WTC11 (cell line): ENCODE measurements at regions of chr12 and their contacts with region 1.

Region 1: GRCh38 chr12:54579696-54580333 is 8.6 kb downstream of the PPP1R1A start:
- DNase-seq: peak; percentile 96
- ATAC-seq: peak; percentile 96
- H3K4me3 Mint-ChIP-seq: no peak overlapping the region
- H3K27ac Mint-ChIP-seq: no peak overlapping the region
- H3K4me1 Mint-ChIP-seq: peaks cover 34% of the 10 kb centered on the region
- H3K27me3 Mint-ChIP-seq: peaks cover 39% of the 10 kb centered on the region
- CTCF ChIP-seq: peak; percentile 100

Region 2: GRCh38 chr12:54560374-54560858 is 19.4 kb before region 1 on chr12:
- CTCF ChIA-PET with region 1: interaction called, 60 read pairs
- POLR2A ChIA-PET with region 1: no interaction called
- DNase-seq: peak; percentile 91
- ATAC-seq: peak; percentile 97
- H3K4me3 Mint-ChIP-seq: peak overlapping the region; percentile 67
- H3K27ac Mint-ChIP-seq: no peak overlapping the region
- H3K4me1 Mint-ChIP-seq: peaks cover 31% of the 10 kb centered on the region
- H3K27me3 Mint-ChIP-seq: peaks cover 63% of the 10 kb centered on the region
- CTCF ChIP-seq: no peak

Region 3: GRCh38 chr12:54603173-54603814 is 23.5 kb after region 1 on chr12:
- CTCF ChIA-PET with region 1: interaction called, 90 read pairs
- POLR2A ChIA-PET with region 1: interaction called, 3 read pairs
- DNase-seq: peak; percentile 75
- ATAC-seq: peak; percentile 90
- H3K4me3 Mint-ChIP-seq: no peak overlapping the region
- H3K27ac Mint-ChIP-seq: no peak overlapping the region
- H3K4me1 Mint-ChIP-seq: no peaks in the 10 kb centered on the region; the same call in 1 of the 2 replicates
- H3K27me3 Mint-ChIP-seq: peaks cover 45% of the 10 kb centered on the region
- CTCF ChIP-seq: peak; percentile 54; the same call in 1 of the 2 replicates

Region 4: DNA sequence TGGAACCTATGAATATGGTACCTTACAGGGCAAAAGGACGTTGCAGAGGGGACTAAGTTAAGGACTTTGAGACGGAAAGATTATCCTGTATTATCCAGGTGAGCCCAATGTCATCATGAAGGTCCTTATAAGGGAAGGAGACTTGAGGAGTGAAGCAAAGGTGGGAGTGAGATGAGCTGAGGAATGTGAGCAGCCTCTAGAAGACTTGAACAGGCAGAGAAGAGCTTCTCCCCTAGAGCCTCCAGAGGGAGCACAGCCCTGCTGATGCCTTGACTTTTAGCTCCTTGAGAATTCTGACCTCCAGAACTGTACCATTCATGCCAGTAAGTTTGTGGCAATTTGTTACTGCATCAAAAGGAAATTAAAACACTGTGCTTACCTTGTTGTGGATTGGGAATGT is 110.2 kb after region 1 on chr12:
- CTCF ChIA-PET with region 1: interaction called, 15 read pairs
- POLR2A ChIA-PET with region 1: no interaction called
- DNase-seq: peak; percentile 40
- ATAC-seq: peak; percentile 99
- H3K4me3 Mint-ChIP-seq: no peak overlapping the region
- H3K27ac Mint-ChIP-seq: no peak overlapping the region
- H3K4me1 Mint-ChIP-seq: peaks cover 20% of the 10 kb centered on the region
- H3K27me3 Mint-ChIP-seq: peaks cover 24% of the 10 kb centered on the region
- CTCF ChIP-seq: no peak

Region 5: GRCh38 chr12:54734196-54734950 is 154.6 kb after region 1 on chr12:
- CTCF ChIA-PET with region 1: no interaction called
- POLR2A ChIA-PET with region 1: no interaction called
- DNase-seq: no peak
- ATAC-seq: no peak
- H3K4me3 Mint-ChIP-seq: no peak overlapping the region
- H3K27ac Mint-ChIP-seq: no peak overlapping the region
- H3K4me1 Mint-ChIP-seq: peaks cover 31% of the 10 kb centered on the region
- H3K27me3 Mint-ChIP-seq: no peaks in the 10 kb centered on the region; the same call in 1 of the 2 replicates
- CTCF ChIP-seq: no peak